HCT116 (cell line): ENCODE measurements at regions of chr11 and their contacts with region 1.

Region 1: GRCh38 chr11:1262172-1263006 is 39.5 kb downstream of the MUC5B start:
- DNase-seq: peak; percentile 83
- ATAC-seq: peak; percentile 85
- H3K4me3 ChIP-seq: peak overlapping the region; percentile 52 to 65
- H3K27ac ChIP-seq: peak overlapping the region; percentile 65
- H3K4me1 ChIP-seq: peaks cover 13 to 32% of the 10 kb centered on the region in 2 experiments; a peak in 3 of 4 replicates
- H3K27me3 ChIP-seq: no peaks in the 10 kb centered on the region
- CTCF ChIP-seq: no peak
- POLR2A ChIP-seq: peak; percentile 85
- RAD21 ChIP-seq: no peak

Region 2: GRCh38 chr11:1293631-1294030 is 31.2 kb after region 1 on chr11:
- CTCF ChIA-PET with region 1: no interaction called
- POLR2A ChIA-PET with region 1: no interaction called
- RAD21 ChIA-PET with region 1: no interaction called
- intact Hi-C with region 1: no loop called
- DNase-seq: no peak
- ATAC-seq: peak; percentile 72
- H3K4me3 ChIP-seq: no peak overlapping the region
- H3K27ac ChIP-seq: no peak overlapping the region
- H3K4me1 ChIP-seq: no peaks in the 10 kb centered on the region
- H3K27me3 ChIP-seq: no peaks in the 10 kb centered on the region
- CTCF ChIP-seq: peak; percentile 34 to 42 (median 37); a peak in 4 of 6 replicates
- POLR2A ChIP-seq: no peak
- RAD21 ChIP-seq: peak; percentile 77

Region 3: DNA sequence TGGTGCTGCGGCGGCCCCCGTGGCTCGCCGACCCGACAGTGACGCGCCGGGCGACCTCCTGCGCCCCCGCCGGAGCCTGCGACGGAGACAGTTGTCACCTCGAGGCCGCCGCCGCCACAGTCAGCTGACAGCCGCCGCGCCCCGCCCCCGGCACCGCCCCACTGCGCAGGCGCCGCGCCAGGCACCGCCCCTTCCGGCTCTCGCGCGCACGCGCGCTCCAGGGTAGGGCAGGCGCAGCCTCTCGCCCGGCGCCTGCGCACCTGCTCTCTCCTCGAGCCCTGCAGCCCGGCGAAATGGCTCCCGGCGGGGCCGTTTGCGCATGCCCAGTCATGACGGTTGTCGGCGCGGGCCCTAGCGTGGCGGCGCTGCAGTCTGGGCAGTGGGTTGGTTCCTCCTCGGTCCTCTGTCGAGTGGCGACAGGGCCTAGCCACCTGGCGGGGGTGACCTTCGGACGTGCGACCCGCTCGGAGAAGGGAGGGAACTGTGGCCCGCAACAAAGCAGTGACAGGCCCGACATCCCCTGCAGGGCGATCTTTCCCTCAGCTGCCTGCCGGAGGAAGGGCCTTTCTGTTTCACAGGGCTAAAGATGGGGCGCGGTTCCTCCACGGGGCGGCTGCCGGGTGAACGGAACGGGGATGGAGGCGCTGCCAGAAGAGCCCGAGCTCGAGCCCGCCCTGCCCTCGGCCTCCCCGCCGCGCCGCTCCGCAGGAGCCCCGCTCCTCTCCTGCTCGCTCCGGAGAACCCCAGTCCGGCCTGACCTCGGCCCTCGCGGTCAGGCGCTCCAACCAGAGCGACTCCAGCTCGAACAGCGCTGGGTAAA is 47.3 kb after region 1 on chr11 and contains the start of gene TOLLIP:
- CTCF ChIA-PET with region 1: no interaction called
- POLR2A ChIA-PET with region 1: no interaction called
- RAD21 ChIA-PET with region 1: no interaction called
- intact Hi-C with region 1: loop called (anchors 5 kb)
- DNase-seq: peak; percentile 74
- ATAC-seq: peak; percentile 91
- H3K4me3 ChIP-seq: peak within 1 kb of the TSS; percentile 73 to 82
- H3K27ac ChIP-seq: peak within 1 kb of the TSS; percentile 72
- H3K4me1 ChIP-seq: peaks cover 5 to 25% of the 10 kb centered on the region in 2 experiments; a peak in 3 of 4 replicates
- H3K27me3 ChIP-seq: no peaks in the 10 kb centered on the region
- CTCF ChIP-seq: 0 out of 6 replicates have a peak, but pooled peaks of 1 of the 3 experiments have one; percentile 11
- POLR2A ChIP-seq: no peak
- RAD21 ChIP-seq: peak; percentile 22; the same call in 1 of the 2 replicates
- total RNA-seq, gene TOLLIP: 28.5 TPM